Right ventricle myocardium inferior (tissue), 1 donor: ENCODE measurements at regions of chr14 and their contacts with region 1.

Region 1: DNA sequence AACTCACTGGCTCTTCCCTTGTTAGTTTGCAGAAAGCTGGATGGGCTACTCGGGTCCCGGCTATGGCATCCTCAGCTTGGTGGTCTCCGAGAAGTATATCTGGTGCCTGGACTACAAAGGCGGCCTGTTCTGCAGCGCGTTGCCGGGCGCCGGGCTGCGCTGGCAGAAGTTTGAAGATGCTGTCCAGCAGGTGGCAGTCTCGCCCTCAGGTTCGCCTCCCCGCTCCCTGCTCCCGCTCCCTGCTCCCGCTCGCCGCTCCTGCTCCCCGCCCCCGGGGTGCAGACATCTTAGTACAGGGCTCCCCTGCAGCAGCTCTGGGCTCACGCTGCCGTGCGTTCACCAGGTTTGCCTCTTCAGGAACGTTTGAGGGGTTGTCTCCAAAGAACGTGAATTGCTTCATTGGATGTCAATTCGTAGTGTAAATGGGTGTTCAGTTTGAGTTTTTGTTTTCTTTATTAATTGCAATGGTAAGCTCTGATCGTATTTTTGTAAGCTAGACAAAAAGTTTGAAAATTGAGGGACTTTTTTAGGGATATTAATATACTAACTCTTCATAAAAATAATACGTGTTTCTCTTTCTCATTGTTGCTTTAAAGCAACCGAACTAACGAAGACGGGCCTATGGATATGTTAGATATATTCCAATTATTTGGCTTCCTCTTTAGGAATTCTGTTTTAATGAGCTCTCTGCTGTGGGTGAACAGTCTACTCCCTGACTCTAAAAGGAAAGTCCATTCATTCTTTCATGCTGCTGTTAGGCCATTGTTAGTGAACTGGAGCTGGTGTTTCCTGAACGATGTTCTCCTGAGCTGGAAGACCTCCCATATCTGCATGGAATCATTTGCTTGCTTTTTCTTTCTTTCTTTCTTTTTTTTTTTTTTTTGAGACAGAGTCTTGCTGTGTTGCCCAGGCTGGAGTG is 71.3 kb downstream of the ANKRD9 start:
- DNase-seq: peak; percentile 91
- ATAC-seq: peak; percentile 93

Region 2: GRCh38 chr14:102516531-102517415 is 78.5 kb after region 1 on chr14:
- intact Hi-C with region 1: loop called (anchors 1 kb)
- DNase-seq: peak; percentile 85
- ATAC-seq: peak; percentile 85